Spleen (tissue), 13 donors: ENCODE measurements at regions of chr7 and their contacts with region 1.

Region 1: GRCh38 chr7:29946428-29947186 is 43.0 kb downstream of the SCRN1 start:
- DNase-seq: no peak
- H3K4me3 ChIP-seq: no peak overlapping the region
- H3K27ac ChIP-seq: no peak overlapping the region
- H3K4me1 ChIP-seq: no peaks in the 10 kb centered on the region
- H3K27me3 ChIP-seq: peaks cover 0 to 4% (median 0%) of the 10 kb centered on the region in 7 donors
- CTCF ChIP-seq: peak in 7 of 11 experiments; percentile 8 to 43 (median 25)
- POLR2A ChIP-seq: no peak

Region 2: DNA sequence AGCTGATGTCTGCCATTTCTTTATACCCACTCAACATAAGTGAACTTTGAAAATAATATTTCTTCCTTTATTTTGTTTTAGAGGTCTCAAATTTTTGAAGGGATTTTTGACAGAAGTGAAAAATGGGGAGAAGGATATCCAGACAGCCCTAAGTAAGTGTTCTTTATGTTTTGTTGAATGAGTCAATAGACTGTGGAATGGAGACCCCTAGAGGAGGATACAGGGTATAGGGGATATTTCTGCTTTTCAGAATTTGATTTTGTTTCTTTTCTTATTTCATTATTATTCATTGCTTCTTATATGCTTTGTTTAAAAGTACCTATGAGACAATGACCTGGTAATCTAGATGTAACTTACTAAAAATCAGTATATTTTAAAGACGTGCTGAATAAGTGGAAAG is 116.0 kb after region 1 on chr7:
- intact Hi-C with region 1: loop called (anchors 10 kb)
- DNase-seq: no peak
- H3K4me3 ChIP-seq: no peak overlapping the region
- H3K27ac ChIP-seq: no peak overlapping the region
- H3K4me1 ChIP-seq: peaks cover 0 to 12% (median 3%) of the 10 kb centered on the region in 6 donors
- H3K27me3 ChIP-seq: no peaks in the 10 kb centered on the region
- CTCF ChIP-seq: peak in 10 of 11 experiments; percentile 32 to 67 (median 54)
- POLR2A ChIP-seq: no peak